Left cardiac atrium (tissue), 4 donors: ENCODE measurements at regions of chr1 and their contacts with region 1.

Region 1: GRCh38 chr1:43238085-43238484 is 31.7 kb upstream of the TMEM125 start:
- DNase-seq: peak; percentile 78
- ATAC-seq: peak; percentile 81 to 84

Region 2: GRCh38 chr1:42392967-42393848 is 844.9 kb before region 1 on chr1:
- intact Hi-C with region 1: no loop called
- DNase-seq: no peak
- ATAC-seq: no peak

Region 3: GRCh38 chr1:43199064-43199726 is 38.9 kb before region 1 on chr1:
- intact Hi-C with region 1: no loop called
- DNase-seq: no peak
- ATAC-seq: no peak

Region 4: GRCh38 chr1:43288058-43288784 is 50.1 kb after region 1 on chr1:
- intact Hi-C with region 1: no loop called
- DNase-seq: peak; percentile 7
- ATAC-seq: no peak

Region 5: DNA sequence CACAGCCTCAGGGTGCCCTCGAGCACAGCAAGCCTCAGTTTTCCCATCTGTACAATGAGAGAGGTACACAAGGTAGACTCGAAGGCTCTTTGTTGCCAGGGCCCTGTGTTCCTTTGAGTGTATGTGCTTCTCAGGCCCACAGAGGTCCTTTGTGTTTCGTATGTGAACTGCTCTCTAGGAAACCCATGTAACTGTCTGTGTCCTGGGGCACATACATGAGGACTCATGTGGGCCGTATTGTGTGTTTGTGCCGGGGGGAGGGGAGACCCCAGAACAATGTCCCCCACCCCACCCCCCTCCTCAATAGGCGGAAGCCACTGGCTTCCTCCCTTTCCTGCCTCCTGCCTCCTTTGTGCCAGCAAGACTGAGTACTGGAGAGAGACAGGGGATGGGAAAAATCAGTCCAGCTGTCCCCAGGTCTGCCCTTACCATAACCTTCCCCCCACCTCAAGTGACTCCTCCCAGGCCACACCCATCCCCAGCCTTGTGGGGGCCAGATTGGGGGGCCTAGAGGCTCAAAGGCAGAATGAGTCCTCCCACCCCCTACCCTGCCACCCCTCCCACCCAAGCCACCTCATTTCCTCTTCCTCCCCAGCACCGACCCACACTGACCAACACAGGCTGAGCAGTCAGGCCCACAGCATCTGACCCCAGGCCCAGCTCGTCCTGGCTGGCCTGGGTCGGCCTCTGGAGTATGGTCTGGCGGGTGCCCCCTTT is 62.5 kb after region 1 on chr1 and contains the start of gene TIE1:
- intact Hi-C with region 1: loop called in 1 of 2 experiments (anchors 5 kb)
- DNase-seq: peak; percentile 54
- ATAC-seq: peak; percentile 46 to 67
- total RNA-seq, gene TIE1: 23.1 to 38.9 TPM

Region 6: DNA sequence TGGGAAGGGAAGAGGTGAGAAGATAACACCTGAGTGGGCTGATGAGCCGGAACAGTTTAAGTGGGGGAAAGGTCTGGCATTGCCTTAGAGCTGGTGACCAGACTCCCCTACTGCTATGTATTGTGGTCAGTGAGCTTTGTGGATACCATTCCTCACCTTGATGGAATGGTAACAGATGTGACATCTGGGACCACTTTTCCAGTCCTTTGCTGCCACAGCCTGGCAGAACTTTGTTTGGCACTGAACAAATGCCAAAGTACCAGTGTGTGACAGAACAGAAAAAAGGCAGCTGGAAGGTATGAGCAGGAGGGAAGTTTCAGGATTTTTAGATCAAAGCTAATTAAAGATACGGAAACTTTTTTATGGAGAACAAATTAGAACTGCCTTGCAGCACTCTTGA is 145.4 kb after region 1 on chr1:
- intact Hi-C with region 1: loop called (anchors 2 to 10 kb)
- DNase-seq: no peak
- ATAC-seq: peak in 1 of 2 donors; percentile 28

Region 7: DNA sequence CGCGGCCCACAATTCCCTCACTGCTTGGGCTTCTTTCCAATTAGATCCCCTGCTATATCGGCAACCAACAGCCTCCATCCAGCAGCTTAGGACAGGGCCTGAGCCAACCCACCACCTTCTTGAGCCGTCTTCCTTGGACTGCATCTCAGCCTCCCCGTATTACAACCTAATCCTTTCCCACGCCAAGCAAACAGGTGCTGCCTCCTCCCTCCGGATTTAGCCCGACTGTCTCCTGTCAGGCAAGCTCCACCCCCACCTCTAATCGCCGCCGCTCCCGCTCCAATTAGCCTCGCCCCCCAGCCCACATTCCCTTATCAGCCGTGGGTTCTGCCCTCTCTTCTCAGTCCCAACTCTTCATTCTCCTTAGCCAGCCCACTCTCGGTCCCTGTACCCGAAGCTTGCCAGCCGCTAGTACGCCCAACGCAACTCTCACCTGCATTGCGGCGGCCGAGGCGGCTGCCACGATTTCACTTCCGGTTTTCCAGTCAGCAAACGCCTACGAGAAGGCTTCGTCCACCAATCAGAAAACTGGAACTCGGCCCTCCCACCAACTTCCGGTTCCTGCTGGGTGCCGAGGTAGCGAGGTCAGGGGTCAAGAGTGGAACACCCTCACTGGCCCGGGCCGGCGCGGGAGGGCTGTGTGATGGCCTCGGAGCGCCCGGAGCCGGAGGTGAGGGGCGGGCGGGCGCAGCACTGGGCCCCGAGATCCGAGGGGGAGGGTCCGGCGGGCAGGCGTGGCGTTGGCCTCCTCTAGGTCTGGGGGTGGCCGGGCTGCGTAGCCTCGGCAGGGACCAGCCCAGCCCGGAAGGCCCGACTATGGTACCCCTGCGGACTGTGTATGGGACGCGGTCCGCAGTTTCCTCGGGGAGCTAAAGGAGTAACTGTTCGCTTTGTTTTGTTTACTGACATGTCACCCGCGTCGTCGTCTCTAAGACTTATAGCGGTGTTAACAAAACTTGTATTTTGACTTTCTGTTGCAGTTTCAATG is 151.5 kb after region 1 on chr1 and contains the starts of genes MED8 and SZT2:
- intact Hi-C with region 1: loop called in 1 of 2 experiments (anchors 10 kb)
- DNase-seq: peak; percentile 96
- ATAC-seq: peak; percentile 99
- total RNA-seq, gene MED8: 19.1 to 27.4 TPM
- total RNA-seq, gene SZT2: 26.3 to 30.5 TPM

Region 8: DNA sequence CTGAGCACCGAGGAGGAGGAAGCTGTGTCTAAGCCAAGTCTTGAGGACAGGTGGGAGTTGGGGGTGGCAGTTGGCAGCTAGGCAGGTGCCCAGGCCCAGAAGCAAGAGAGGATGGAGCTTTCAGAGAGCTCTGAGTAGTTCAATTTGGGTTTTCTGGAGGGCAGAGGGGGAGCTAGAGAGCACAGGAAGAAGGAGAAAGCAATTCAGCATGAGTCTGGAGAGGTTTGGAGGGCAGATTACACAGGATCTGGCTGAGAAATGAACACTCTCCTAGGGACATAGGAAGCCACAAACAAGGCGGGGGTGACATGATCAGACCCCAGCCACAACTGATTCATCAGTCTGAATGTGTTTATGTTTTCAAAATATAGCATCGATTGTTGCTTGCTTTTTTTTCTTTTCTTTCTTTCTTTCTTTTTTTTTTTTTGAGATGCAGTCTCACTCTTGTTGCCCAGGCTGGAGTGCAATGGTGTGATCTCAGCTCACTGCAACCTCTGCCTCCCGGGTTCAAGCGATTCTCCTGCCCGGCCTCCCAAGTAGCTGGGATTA is 316.4 kb after region 1 on chr1:
- intact Hi-C with region 1: no loop called
- DNase-seq: no peak
- ATAC-seq: no peak